Stomach (tissue), 19 donors: ENCODE measurements at regions of chr15 and their contacts with region 1.

Region 1: GRCh38 chr15:65086017-65086679 is 9.6 kb downstream of the KBTBD13 start:
- DNase-seq: peak; percentile 38 to 45
- H3K4me3 ChIP-seq: no peak overlapping the region
- H3K27ac ChIP-seq: peak overlapping the region in 3 of 5 donors; percentile 4 to 87 (median 80)
- H3K4me1 ChIP-seq: peaks cover 11 to 66% (median 29%) of the 10 kb centered on the region in 4 donors
- H3K27me3 ChIP-seq: peaks cover 0 to 30% (median 0%) of the 10 kb centered on the region in 3 donors
- CTCF ChIP-seq: peak in 2 of 7 experiments; percentile 26 to 36
- EP300 ChIP-seq: no peak
- POLR2A ChIP-seq: no peak

Region 2: DNA sequence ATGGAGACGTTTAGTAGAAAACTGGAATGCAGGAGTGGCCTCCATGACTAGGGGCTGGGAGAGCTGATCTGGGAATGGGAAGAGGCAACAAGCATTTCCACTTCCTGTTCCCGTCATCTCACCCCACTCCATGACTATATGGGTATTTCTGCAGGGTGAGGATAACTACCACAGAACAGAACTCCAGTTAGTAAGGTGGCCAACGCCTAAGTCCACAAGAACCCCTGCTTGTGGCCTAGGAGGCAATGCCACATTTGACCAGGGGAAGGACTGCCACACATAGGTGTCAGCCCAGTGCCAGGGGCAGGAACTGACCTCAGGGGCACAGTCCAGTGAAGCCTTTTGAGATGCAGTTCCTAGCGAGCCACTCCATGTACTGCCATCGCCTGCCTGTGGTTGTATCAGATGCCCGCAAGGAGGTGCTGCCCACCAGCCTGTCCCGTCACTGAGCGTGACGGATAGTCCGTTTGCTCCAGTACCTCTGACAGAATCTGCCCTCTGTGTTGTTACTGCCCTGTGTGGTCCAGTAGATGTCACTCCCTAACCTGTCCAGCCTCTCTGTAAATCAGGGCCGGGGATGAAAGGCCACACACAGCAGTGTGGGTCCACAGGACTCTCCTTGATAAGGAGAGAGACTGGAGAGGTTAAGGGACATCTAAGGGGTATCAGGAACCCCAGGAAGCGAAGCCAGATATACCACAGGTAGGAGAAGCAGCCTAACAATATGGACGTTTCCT is 53.2 kb before region 1 on chr15:
- intact Hi-C with region 1: loop called (anchors 10 kb)
- DNase-seq: peak; percentile 68 to 83
- H3K4me3 ChIP-seq: no peak overlapping the region
- H3K27ac ChIP-seq: no peak overlapping the region
- H3K4me1 ChIP-seq: peaks cover 5 to 29% (median 16%) of the 10 kb centered on the region in 4 donors
- H3K27me3 ChIP-seq: no peaks in the 10 kb centered on the region
- CTCF ChIP-seq: peak in 5 of 7 experiments; percentile 40 to 60 (median 57)
- EP300 ChIP-seq: no peak
- POLR2A ChIP-seq: no peak